Naive thymus-derived CD4-positive, alpha-beta T cell (primary cell): ENCODE measurements at regions of chr6 and their contacts with region 1.

Region 1: DNA sequence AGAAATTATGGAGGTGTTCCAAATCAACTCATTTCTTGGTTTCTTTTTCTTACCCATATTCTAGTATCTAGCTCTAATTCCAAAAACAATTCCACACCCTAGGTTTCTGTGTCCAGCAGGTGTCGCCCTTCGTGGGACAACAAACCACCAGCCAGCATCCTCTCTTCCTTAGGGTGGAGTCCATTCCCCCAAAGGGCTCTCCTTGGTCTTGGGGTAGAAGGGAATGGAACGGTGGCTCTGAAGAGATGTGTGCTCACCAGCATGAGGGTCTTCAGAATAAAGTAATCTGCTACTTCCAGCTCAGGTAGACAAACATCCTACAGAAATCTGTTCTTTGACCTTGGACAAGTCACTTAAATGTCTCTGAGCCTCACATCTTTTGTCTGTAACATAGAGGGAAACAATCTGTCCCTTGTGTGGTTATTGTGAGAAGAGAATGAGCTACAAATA is 7.2 kb downstream of the HLA-DMB start:
- DNase-seq: peak; percentile 47 to 77 (median 67)
- ATAC-seq: peak; percentile 79
- H3K4me3 ChIP-seq: no peak overlapping the region
- H3K4me3 Mint-ChIP-seq: no peak overlapping the region
- H3K27ac ChIP-seq: no peak overlapping the region
- H3K27ac Mint-ChIP-seq: peak overlapping the region in 2 of 9 donors; percentile 32 to 45
- H3K4me1 ChIP-seq: no peaks in the 10 kb centered on the region
- H3K4me1 Mint-ChIP-seq: peaks cover 0 to 24% (median 6%) of the 10 kb centered on the region in 7 donors
- H3K27me3 ChIP-seq: no peaks in the 10 kb centered on the region
- H3K27me3 Mint-ChIP-seq: peaks cover 0 to 35% (median 0%) of the 10 kb centered on the region in 5 donors

Region 2: GRCh38 chr6:32947552-32948465 is 14.1 kb after region 1 on chr6:
- CTCF ChIA-PET with region 1: interaction called, 411 read pairs
- POLR2A ChIA-PET with region 1: interaction called, 30 read pairs
- intact Hi-C with region 1: loop called (anchors 1 kb)
- DNase-seq: peak in 6 of 9 donors; percentile 19 to 54 (median 36)
- ATAC-seq: peak; percentile 37
- H3K4me3 ChIP-seq: no peak overlapping the region
- H3K4me3 Mint-ChIP-seq: no peak overlapping the region
- H3K27ac ChIP-seq: no peak overlapping the region
- H3K27ac Mint-ChIP-seq: peak overlapping the region in 1 of 9 donors; percentile 47
- H3K4me1 ChIP-seq: peaks cover 32 to 45% of the 10 kb centered on the region in 2 donors
- H3K4me1 Mint-ChIP-seq: peaks cover 54 to 73% (median 63%) of the 10 kb centered on the region in 7 donors
- H3K27me3 ChIP-seq: no peaks in the 10 kb centered on the region
- H3K27me3 Mint-ChIP-seq: no peaks in the 10 kb centered on the region